Endothelial cell of umbilical vein (primary cell): ENCODE measurements at regions of chr1 and their contacts with region 1.

Region 1: GRCh38 chr1:95043141-95043980 is 29.4 kb downstream of the ALG14 start:
- DNase-seq: peak; percentile 87
- H3K4me3 ChIP-seq: no peak overlapping the region
- H3K27ac ChIP-seq: no peak overlapping the region
- H3K4me1 ChIP-seq: no peaks in the 10 kb centered on the region
- H3K27me3 ChIP-seq: no peaks in the 10 kb centered on the region
- CTCF ChIP-seq: peak; percentile 92 to 98
- POLR2A ChIP-seq: no peak

Region 2: DNA sequence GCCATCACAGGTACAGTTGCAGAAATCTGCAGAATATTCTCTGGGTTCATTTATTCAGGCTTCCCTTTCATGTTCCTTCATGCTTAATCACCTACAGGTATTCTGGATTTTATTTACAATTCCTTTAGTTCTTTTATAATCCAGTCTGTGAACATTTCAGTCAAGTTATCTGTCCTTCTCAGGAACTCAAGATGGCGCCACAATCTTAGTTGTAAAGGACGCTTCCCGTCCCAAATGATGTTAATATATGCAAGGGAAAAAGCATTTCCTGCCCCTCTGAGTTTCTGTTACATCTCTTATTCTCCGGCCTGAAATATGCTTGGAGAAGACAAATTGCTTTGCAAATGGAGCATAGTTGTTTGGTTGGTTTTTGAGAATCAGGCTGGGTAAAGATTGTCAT is 521.1 kb before region 1 on chr1:
- CTCF ChIA-PET with region 1: interaction called, 20 read pairs
- POLR2A ChIA-PET with region 1: no interaction called
- dilution Hi-C with region 1: no loop called
- intact Hi-C with region 1: no loop called
- DNase-seq: peak; percentile 52
- H3K4me3 ChIP-seq: no peak overlapping the region
- H3K27ac ChIP-seq: no peak overlapping the region
- H3K4me1 ChIP-seq: no peaks in the 10 kb centered on the region
- H3K27me3 ChIP-seq: no peaks in the 10 kb centered on the region
- CTCF ChIP-seq: peak in 1 of 2 donors; percentile 28
- POLR2A ChIP-seq: no peak

Region 3: GRCh38 chr1:94832446-94832845 is 210.9 kb before region 1 on chr1:
- CTCF ChIA-PET with region 1: interaction called, 11 read pairs
- POLR2A ChIA-PET with region 1: no interaction called
- dilution Hi-C with region 1: no loop called
- intact Hi-C with region 1: no loop called
- DNase-seq: no peak
- H3K4me3 ChIP-seq: no peak overlapping the region
- H3K27ac ChIP-seq: no peak overlapping the region
- H3K4me1 ChIP-seq: no peaks in the 10 kb centered on the region
- H3K27me3 ChIP-seq: peaks cover 13 to 17% of the 10 kb centered on the region in 2 experiments
- CTCF ChIP-seq: no peak
- POLR2A ChIP-seq: no peak

Region 4: GRCh38 chr1:94873522-94874351 is 169.6 kb before region 1 on chr1:
- CTCF ChIA-PET with region 1: interaction called, 16 read pairs
- POLR2A ChIA-PET with region 1: no interaction called
- dilution Hi-C with region 1: no loop called
- intact Hi-C with region 1: no loop called
- DNase-seq: no peak
- H3K4me3 ChIP-seq: no peak overlapping the region
- H3K27ac ChIP-seq: no peak overlapping the region
- H3K4me1 ChIP-seq: peaks cover 29% of the 10 kb centered on the region
- H3K27me3 ChIP-seq: no peaks in the 10 kb centered on the region
- CTCF ChIP-seq: no peak
- POLR2A ChIP-seq: no peak

Region 5: DNA sequence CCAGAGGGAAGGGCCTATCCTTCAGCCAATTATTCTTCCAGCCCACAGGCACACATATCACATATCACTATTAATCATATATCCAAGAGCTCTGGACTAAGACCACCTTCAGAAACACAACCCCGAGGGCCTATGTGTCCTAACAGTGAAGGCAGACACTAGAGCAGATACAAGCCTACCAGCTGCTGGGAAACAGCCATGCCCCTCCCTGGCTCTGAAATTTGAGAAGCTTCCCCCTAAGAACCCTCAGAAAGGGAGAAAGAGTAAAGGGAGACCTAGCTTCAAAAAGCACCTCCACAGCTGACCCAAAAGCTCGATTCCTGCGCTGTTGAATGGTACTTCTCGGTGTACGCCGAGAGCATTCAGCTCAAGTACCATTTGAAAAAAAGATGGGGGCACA is 133.9 kb before region 1 on chr1:
- CTCF ChIA-PET with region 1: interaction called, 24 read pairs
- POLR2A ChIA-PET with region 1: no interaction called
- dilution Hi-C with region 1: loop called (anchors 25 kb)
- intact Hi-C with region 1: loop called (anchors 1 kb)
- DNase-seq: no peak
- H3K4me3 ChIP-seq: no peak overlapping the region
- H3K27ac ChIP-seq: no peak overlapping the region
- H3K4me1 ChIP-seq: peaks cover under 1% of the 10 kb centered on the region
- H3K27me3 ChIP-seq: no peaks in the 10 kb centered on the region
- CTCF ChIP-seq: no peak
- POLR2A ChIP-seq: no peak

Region 6: GRCh38 chr1:94983171-94983739 is 60.1 kb before region 1 on chr1:
- CTCF ChIA-PET with region 1: interaction called, 10 read pairs
- POLR2A ChIA-PET with region 1: no interaction called
- dilution Hi-C with region 1: no loop called
- intact Hi-C with region 1: no loop called
- DNase-seq: peak; percentile 29
- H3K4me3 ChIP-seq: no peak overlapping the region
- H3K27ac ChIP-seq: no peak overlapping the region
- H3K4me1 ChIP-seq: peaks cover 35% of the 10 kb centered on the region
- H3K27me3 ChIP-seq: no peaks in the 10 kb centered on the region
- CTCF ChIP-seq: no peak
- POLR2A ChIP-seq: no peak

Region 7: DNA sequence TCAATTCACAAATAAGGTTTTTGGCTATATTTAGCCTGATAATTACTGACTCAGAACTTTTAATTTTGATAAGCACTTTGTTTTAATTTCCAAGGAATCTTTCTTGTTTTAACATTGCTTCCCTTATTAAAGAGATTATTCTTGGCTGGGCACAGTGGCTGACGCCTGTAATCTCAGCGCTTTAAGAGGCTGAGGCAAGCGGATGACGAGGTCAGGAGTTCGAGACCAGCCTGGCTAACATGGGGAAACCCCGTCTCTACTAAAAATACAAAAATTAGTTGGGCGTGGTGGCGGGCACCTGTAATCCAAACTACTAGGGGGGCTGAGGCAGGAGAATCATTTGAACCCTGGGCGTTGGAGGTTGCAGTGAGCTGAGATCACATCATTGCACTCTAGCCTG is 15.6 kb after region 1 on chr1:
- CTCF ChIA-PET with region 1: interaction called, 12 read pairs
- POLR2A ChIA-PET with region 1: no interaction called
- dilution Hi-C with region 1: no loop called
- intact Hi-C with region 1: no loop called
- DNase-seq: peak; percentile 37
- H3K4me3 ChIP-seq: no peak overlapping the region
- H3K27ac ChIP-seq: no peak overlapping the region
- H3K4me1 ChIP-seq: no peaks in the 10 kb centered on the region
- H3K27me3 ChIP-seq: no peaks in the 10 kb centered on the region
- CTCF ChIP-seq: no peak
- POLR2A ChIP-seq: no peak